SK-N-SH (cell line): ENCODE measurements at regions of chr12 and their contacts with region 1.

Region 1: DNA sequence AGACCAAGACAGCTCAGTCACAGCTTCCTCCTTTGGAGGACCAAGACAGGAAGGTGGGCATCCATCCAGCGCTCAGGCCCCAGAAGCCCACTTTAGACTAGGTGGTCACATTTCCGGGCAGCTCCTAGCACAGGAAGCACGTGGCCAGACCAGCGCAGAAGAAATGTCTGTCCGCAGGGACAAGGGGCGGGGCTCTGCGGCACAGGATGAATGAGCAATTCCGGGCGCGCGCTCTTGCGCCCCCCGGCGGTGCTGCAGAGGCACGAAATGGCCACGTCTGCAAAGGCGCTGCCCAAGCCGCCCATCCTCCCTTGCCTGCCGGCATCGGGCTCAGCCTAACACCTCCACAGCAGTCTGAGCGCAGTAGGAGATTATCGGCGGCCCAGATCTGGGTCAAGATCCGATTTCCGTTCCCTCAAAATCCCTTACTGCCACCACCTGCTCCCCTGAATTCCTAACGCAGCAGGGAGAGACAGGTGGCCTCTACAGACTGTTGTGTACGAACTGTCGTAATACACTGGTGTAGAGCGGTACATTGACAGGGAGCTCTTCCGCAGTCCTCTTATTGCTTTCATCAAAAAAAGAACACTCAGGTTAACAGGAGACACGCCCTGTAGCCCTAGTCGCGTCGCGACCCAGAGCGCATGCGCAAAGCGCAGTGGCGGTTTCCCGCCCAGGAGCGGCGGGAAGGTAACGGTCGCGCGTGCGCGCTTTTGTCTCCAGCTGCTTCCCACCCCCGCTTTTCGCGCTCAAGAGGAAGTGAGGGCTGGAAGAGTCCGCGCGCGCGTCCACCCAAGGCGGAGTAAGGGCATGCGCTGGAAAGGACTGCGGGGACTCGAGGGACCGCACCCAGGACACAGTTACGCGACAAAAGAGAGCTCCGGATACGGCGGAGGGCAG is 794 bp downstream of the TUBA1B start:
- DNase-seq: peak; percentile 88
- H3K4me3 ChIP-seq: peak overlapping the region; percentile 77 to 99
- H3K27ac ChIP-seq: peak overlapping the region; percentile 94 to 97
- H3K4me1 ChIP-seq: peaks cover 10 to 15% of the 10 kb centered on the region in 2 experiments; a peak in 3 of 4 replicates
- H3K27me3 ChIP-seq: no peaks in the 10 kb centered on the region
- CTCF ChIP-seq: peak; percentile 87
- EP300 ChIP-seq: peak in 1 of 2 experiments; percentile 29; a peak in 1 of 4 replicates
- RAD21 ChIP-seq: peak; percentile 44

Region 2: DNA sequence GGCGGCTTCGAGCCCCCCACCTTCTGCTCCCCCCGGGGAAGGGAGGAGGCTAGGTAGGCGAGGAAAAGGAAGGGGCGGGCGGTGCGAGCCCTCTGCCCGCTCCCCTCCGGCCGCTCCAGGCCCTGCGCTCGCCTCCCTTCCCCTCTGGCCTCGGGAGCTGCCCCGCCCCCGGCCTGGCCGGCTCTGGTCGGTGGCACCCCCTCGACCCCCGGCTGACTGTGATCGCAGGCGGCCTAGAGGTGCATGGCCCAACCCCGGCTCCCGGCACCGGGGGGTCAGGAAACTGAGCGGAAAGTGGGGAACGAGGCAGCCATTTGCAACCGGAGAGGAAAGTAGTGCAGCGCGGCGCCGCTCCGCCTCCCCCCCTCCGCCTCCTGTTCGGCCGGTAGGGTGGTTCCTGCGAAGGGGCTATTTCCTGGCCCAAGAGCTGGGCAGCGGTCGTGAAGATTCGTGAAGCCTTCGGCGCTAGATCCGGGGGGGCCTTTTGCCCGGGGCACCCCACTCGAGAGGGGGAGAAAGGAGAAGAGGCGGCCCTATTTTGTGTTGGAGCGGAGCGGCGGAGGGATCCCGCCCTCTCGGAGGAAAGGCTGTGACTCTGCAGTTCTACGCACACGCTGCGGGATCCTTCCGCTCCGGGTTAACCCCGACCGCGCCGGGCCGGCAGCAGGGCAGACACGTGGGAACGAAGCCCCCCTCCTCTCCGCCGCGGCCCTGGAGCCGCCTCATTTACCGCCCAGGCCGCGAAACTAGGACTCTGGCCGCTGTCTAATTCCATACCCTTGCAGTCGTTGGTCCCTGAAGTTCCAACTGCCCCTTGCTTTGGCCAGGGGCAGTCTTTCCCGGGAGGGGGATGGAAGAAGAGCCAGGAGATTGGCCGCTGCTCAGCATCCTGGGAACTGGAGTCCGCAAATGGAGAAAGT is 69.9 kb before region 1 on chr12 and contains the start of gene KMT2D:
- CTCF ChIA-PET with region 1: interaction called, 20 read pairs
- POLR2A ChIA-PET with region 1: interaction called, 4 read pairs
- DNase-seq: peak; percentile 95
- H3K4me3 ChIP-seq: peak within 1 kb of the TSS; percentile 90 to 96
- H3K27ac ChIP-seq: peak within 1 kb of the TSS; percentile 93 to 97
- H3K4me1 ChIP-seq: peaks cover 16 to 37% of the 10 kb centered on the region in 2 experiments; a peak in 3 of 4 replicates
- H3K27me3 ChIP-seq: no peaks in the 10 kb centered on the region
- CTCF ChIP-seq: peak; percentile 44
- EP300 ChIP-seq: no peak
- RAD21 ChIP-seq: no peak
- polyA plus RNA-seq, gene KMT2D: 16.3 and 30.5 TPM in 2 replicates

Region 3: DNA sequence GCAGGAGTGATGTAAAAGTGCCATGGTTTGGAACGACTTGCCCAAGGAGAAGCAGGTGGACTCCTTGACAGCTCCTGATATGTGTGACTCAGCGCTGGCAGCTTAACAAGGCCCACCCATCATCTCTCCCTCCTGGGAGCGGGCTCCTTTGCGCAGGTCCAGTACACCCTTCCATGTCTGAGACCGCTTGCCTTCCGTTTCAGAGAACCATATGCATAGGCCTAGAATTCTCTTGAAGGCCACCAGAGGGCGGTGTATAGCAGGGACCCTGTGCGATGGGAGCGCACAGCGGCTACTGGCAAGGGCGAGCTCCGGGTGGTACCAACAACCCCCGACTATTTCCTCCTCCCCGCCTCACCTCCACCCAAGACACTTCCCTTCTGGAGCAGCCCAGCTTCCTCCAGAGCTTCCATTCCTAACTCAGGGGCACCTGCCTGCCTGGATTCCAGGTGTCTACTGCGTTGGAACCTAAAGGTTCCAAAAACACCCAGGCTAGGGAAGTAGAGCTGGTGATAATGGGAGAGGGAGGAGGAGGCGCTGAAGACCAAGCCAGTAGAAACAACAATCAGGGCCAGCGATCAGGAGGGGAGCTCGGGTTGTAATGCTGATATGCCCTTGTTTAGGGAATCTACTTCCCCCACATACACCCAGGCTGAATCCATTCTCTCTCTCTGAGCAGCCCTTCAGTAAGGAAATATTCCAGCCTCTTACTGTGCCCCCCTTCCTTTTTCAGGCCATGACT is 42.0 kb before region 1 on chr12:
- CTCF ChIA-PET with region 1: interaction called, 137 read pairs
- POLR2A ChIA-PET with region 1: interaction called, 12 read pairs
- DNase-seq: peak; percentile 86
- H3K4me3 ChIP-seq: peak overlapping the region in 1 of 2 experiments; percentile 49; a peak in 2 of 4 replicates
- H3K27ac ChIP-seq: no peak overlapping the region
- H3K4me1 ChIP-seq: peaks cover 0 to 24% of the 10 kb centered on the region in 2 experiments; a peak in 1 of 4 replicates
- H3K27me3 ChIP-seq: no peaks in the 10 kb centered on the region
- CTCF ChIP-seq: peak; percentile 87
- EP300 ChIP-seq: no peak
- RAD21 ChIP-seq: peak; percentile 79

Region 4: GRCh38 chr12:49105608-49106007 is 24.8 kb before region 1 on chr12:
- CTCF ChIA-PET with region 1: interaction called, 28 read pairs
- POLR2A ChIA-PET with region 1: interaction called, 28 read pairs
- DNase-seq: no peak
- H3K4me3 ChIP-seq: no peak overlapping the region
- H3K27ac ChIP-seq: no peak overlapping the region
- H3K4me1 ChIP-seq: peaks cover 0 to 12% of the 10 kb centered on the region in 2 experiments; a peak in 1 of 4 replicates
- H3K27me3 ChIP-seq: no peaks in the 10 kb centered on the region
- CTCF ChIP-seq: no peak
- EP300 ChIP-seq: no peak
- RAD21 ChIP-seq: no peak

Region 5: GRCh38 chr12:49188914-49189367 is 58.5 kb after region 1 on chr12 and contains the start of gene TUBA1A:
- CTCF ChIA-PET with region 1: interaction called, 18 read pairs
- POLR2A ChIA-PET with region 1: interaction called, 97 read pairs
- DNase-seq: peak; percentile 93
- H3K4me3 ChIP-seq: peak within 1 kb of the TSS; percentile 91 to 94
- H3K27ac ChIP-seq: peak within 1 kb of the TSS; percentile 98
- H3K4me1 ChIP-seq: peaks cover 6 to 28% of the 10 kb centered on the region in 2 experiments; a peak in 2 of 4 replicates
- H3K27me3 ChIP-seq: no peaks in the 10 kb centered on the region
- CTCF ChIP-seq: no peak
- EP300 ChIP-seq: peak; percentile 16 to 63; a peak in 3 of 4 replicates
- RAD21 ChIP-seq: no peak
- polyA plus RNA-seq, gene TUBA1A: 1,427 and 1,906 TPM in 2 replicates

Region 6: DNA sequence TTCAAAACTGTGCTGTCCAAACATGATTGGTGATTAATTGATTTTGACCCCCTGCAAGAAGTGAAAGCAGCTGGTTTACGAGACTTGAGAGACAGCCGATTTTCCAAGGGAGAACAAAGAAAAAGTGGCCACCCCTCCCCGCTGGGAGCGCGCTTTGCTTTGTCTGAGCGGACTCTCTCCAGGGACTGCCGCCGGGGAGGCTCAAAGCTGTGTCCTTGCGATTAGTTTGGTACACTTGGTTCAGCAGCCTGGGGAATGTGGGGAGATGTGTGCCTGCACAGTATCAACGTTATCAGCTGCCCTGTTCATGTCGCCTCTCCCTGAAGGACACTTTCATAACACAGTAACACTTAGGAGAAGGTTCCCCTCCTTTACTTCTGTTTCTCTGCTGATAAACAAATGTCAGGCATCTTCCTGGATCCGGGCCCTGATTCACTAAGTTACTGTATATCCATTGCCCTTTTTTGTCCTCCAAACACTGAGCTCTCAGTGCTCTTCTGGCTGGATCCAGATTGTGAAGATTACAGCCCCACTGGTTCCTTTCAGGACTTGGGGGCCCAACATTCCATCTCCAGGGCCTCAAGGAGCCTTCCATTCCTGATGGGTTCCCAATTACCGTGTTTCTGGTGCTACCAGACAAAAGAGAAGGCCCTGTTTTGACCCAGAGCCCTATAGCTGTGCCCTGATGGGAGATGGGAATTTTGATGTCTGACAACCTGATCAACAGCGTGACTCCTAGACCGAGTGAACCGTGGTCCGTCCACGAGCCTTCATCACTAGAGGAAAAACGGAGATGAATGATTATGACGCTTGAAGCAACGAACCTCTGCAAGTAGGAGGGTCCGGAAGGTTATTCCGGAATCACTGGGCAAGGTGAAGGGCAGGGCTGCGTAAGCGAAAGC is 102.8 kb after region 1 on chr12:
- CTCF ChIA-PET with region 1: interaction called, 61 read pairs
- POLR2A ChIA-PET with region 1: interaction called, 40 read pairs
- DNase-seq: peak; percentile 64
- H3K4me3 ChIP-seq: peak overlapping the region in 1 of 2 experiments; percentile 41; a peak in 2 of 4 replicates
- H3K27ac ChIP-seq: peak overlapping the region; percentile 79 to 90
- H3K4me1 ChIP-seq: peaks cover 23 to 25% of the 10 kb centered on the region in 2 experiments
- H3K27me3 ChIP-seq: no peaks in the 10 kb centered on the region
- CTCF ChIP-seq: peak; percentile 41
- EP300 ChIP-seq: peak in 1 of 2 experiments; percentile 44; a peak in 1 of 4 replicates
- RAD21 ChIP-seq: no peak